ENCODE measurements at regions of chr16 and their contacts with region 1.

Region 1: GRCh38 chr16:4271176-4272066 is 1.4 kb downstream of the TFAP4 start:
- DNase-seq: peak; percentile 91
- ATAC-seq: peak; percentile 85
- H3K4me3 ChIP-seq: peak overlapping the region; percentile 76 to 88 (median 87)
- H3K27ac ChIP-seq: peak overlapping the region; percentile 90
- H3K4me1 ChIP-seq: peaks cover 35% of the 10 kb centered on the region
- H3K27me3 ChIP-seq: no peaks in the 10 kb centered on the region; a peak in 1 of 5 replicates
- CTCF ChIP-seq: peak; percentile 46
- EP300 ChIP-seq: no peak
- POLR2A ChIP-seq: peak; percentile 70 to 78
- RAD21 ChIP-seq: peak; percentile 60

Region 2: GRCh38 chr16:4253394-4254150 is 17.8 kb before region 1 on chr16:
- CTCF ChIA-PET with region 1: interaction called, 3 read pairs
- POLR2A ChIA-PET with region 1: interaction called, 50 read pairs
- in situ Hi-C with region 1: no loop called
- intact Hi-C with region 1: no loop called
- DNase-seq: peak; percentile 97
- ATAC-seq: peak; percentile 96
- H3K4me3 ChIP-seq: peak overlapping the region; percentile 48 to 77 (median 74); a peak in 5 of 6 replicates
- H3K27ac ChIP-seq: peak overlapping the region; percentile 69
- H3K4me1 ChIP-seq: 0 out of 2 replicates have a peak, but pooled peaks cover 6% of the 10 kb centered on the region
- H3K27me3 ChIP-seq: no peaks in the 10 kb centered on the region
- CTCF ChIP-seq: no peak; the same call in 1 of the 2 replicates
- EP300 ChIP-seq: no peak
- POLR2A ChIP-seq: peak; percentile 87
- RAD21 ChIP-seq: no peak; the same call in 1 of the 2 replicates

Region 3: GRCh38 chr16:4288148-4288921 is 16.9 kb after region 1 on chr16:
- CTCF ChIA-PET with region 1: no interaction called
- POLR2A ChIA-PET with region 1: interaction called, 24 read pairs
- in situ Hi-C with region 1: no loop called
- intact Hi-C with region 1: no loop called
- DNase-seq: peak; percentile 55
- ATAC-seq: peak; percentile 77
- H3K4me3 ChIP-seq: peak overlapping the region; percentile 7 to 55 (median 21); a peak in 4 of 6 replicates
- H3K27ac ChIP-seq: no peak overlapping the region
- H3K4me1 ChIP-seq: peaks cover 65% of the 10 kb centered on the region
- H3K27me3 ChIP-seq: peaks cover 0 to 14% of the 10 kb centered on the region in 2 experiments; a peak in 4 of 5 replicates
- CTCF ChIP-seq: peak; percentile 97
- EP300 ChIP-seq: no peak
- POLR2A ChIP-seq: no peak
- RAD21 ChIP-seq: peak; percentile 88

Region 4: DNA sequence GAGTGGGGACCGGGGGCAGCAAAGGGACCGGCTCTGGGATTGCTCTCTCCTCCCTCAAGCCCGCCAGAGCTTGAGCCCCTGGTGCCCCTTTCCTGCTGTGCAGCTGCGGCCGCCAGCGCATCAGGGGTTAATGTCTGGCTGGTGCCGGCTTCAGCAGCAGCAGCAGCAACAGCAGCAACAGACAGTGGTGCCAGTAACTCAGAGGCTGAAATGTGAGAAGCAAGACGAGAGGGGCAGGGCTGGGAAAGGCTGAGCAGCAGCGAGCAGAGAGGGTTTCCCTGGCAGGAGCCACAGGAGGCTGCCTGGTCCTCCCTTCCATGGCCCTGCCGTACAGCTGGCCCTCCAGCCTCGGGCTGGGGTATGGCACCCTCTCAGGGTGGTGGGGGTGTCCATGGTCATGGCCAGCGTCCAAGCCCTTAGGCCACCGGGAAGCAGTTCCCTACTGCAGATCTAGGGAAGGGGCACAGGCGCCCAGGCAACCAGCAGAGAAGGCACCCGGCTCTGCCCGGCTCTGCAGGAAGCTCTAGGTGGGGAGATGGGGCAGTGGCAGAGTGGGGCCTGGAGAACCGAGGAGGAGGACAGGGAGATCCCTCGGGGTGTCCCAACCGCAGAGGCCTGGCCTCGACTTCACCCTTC is 22.5 kb after region 1 on chr16:
- CTCF ChIA-PET with region 1: no interaction called
- POLR2A ChIA-PET with region 1: interaction called, 7 read pairs
- in situ Hi-C with region 1: no loop called
- intact Hi-C with region 1: loop called (anchors 2 kb)
- DNase-seq: no peak
- ATAC-seq: peak; percentile 84
- H3K4me3 ChIP-seq: peak overlapping the region in 2 of 3 experiments; percentile 13 to 60; a peak in 4 of 6 replicates
- H3K27ac ChIP-seq: no peak overlapping the region
- H3K4me1 ChIP-seq: peaks cover 39% of the 10 kb centered on the region
- H3K27me3 ChIP-seq: peaks cover 5 to 32% of the 10 kb centered on the region in 2 experiments; a peak in 3 of 5 replicates
- CTCF ChIP-seq: no peak; the same call in 1 of the 2 replicates
- EP300 ChIP-seq: no peak
- POLR2A ChIP-seq: no peak
- RAD21 ChIP-seq: no peak

Region 5: GRCh38 chr16:4307215-4308037 is 36.0 kb after region 1 on chr16:
- CTCF ChIA-PET with region 1: no interaction called
- POLR2A ChIA-PET with region 1: interaction called, 6 read pairs
- in situ Hi-C with region 1: no loop called
- intact Hi-C with region 1: loop called (anchors 5 kb)
- DNase-seq: peak; percentile 80
- ATAC-seq: peak; percentile 71
- H3K4me3 ChIP-seq: peak overlapping the region; percentile 62 to 73 (median 65); a peak in 5 of 6 replicates
- H3K27ac ChIP-seq: peak overlapping the region; percentile 42
- H3K4me1 ChIP-seq: peaks cover 47% of the 10 kb centered on the region
- H3K27me3 ChIP-seq: peaks cover 0 to 9% of the 10 kb centered on the region in 2 experiments; a peak in 2 of 5 replicates
- CTCF ChIP-seq: 0 out of 2 replicates have a peak, but pooled peaks have one; percentile 11
- EP300 ChIP-seq: peak in 1 of 2 experiments; percentile 34; a peak in 1 of 4 replicates
- POLR2A ChIP-seq: peak in 1 of 2 experiments; percentile 56; a peak in 1 of 4 replicates
- RAD21 ChIP-seq: no peak

Region 6: GRCh38 chr16:4315186-4316109 is 44.0 kb after region 1 on chr16 and contains the start of gene GLIS2:
- CTCF ChIA-PET with region 1: no interaction called
- POLR2A ChIA-PET with region 1: interaction called, 12 read pairs
- in situ Hi-C with region 1: loop called (anchors 10 kb)
- intact Hi-C with region 1: no loop called
- DNase-seq: no peak
- ATAC-seq: no peak
- H3K4me3 ChIP-seq: peak within 1 kb of the TSS; percentile 49 to 69 (median 58)
- H3K27ac ChIP-seq: no peak within 1 kb of the TSS
- H3K4me1 ChIP-seq: peaks cover 78% of the 10 kb centered on the region
- H3K27me3 ChIP-seq: peaks cover 3 to 35% of the 10 kb centered on the region in 2 experiments; a peak in 4 of 5 replicates
- CTCF ChIP-seq: no peak
- EP300 ChIP-seq: no peak
- POLR2A ChIP-seq: no peak
- RAD21 ChIP-seq: no peak
- total RNA-seq, gene GLIS2: 0.24 and 0.29 TPM in 2 replicates

Region 7: GRCh38 chr16:4344983-4345835 is 73.8 kb after region 1 on chr16:
- CTCF ChIA-PET with region 1: no interaction called
- POLR2A ChIA-PET with region 1: interaction called, 11 read pairs
- in situ Hi-C with region 1: no loop called
- intact Hi-C with region 1: no loop called
- DNase-seq: peak; percentile 87
- ATAC-seq: peak; percentile 67
- H3K4me3 ChIP-seq: peak overlapping the region; percentile 39 to 74 (median 46)
- H3K27ac ChIP-seq: peak overlapping the region; percentile 88
- H3K4me1 ChIP-seq: peaks cover 57% of the 10 kb centered on the region
- H3K27me3 ChIP-seq: no peaks in the 10 kb centered on the region
- CTCF ChIP-seq: no peak
- EP300 ChIP-seq: no peak
- POLR2A ChIP-seq: peak in 1 of 2 experiments; percentile 62; a peak in 2 of 4 replicates
- RAD21 ChIP-seq: no peak